Heart left ventricle (tissue), 16 donors: ENCODE measurements at regions of chr2 and their contacts with region 1.

Region 1: DNA sequence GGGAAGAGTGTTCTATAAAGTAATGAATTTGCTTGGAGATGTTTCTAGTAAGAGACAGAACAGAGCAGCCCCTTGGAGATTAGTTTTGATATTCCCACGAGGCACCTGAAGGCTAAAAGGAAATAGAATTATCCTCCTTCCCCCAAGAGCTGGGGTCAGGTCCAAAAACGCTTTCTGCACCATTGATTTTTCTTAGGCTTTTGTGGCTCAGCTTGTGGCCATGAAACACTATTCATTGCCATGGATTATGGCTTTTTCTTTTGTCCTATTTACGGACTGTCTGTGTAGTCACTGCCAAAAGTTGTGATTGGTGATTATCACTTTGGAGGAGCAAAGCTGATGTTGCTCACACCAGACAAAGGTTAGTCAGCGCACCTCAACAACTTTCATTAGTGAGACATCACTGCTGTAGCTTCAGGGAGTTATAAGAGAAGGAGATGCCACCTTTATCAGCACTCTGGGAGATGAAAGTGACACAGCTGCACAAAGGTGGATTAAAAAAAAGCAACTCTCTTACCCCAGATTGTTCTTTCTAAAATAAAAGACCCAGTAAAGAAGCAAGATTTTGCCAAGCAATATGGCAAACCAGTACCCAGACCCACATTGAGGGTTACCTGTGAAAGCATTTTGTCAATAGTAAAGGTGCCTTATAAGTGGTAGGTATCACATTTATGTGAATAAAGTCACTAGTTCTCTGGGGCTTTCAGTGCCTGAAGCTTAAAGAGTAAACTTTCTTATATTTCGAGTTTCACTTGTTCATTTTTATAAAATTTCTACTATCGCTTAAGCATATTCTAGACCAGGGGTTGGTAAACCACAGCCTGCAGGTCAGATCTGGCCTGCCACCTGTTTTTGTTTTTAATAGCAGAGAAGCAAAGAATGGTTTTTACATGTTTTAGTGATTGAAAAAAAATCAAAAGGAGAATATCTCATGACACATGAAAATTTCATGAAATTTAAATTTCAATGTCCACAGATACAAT is 10.6 kb downstream of the CXCR4 start:
- DNase-seq: no peak
- ATAC-seq: no peak
- H3K4me3 ChIP-seq: no peak overlapping the region
- H3K27ac ChIP-seq: no peak overlapping the region
- H3K4me1 ChIP-seq: peaks cover 0 to 5% (median 0%) of the 10 kb centered on the region in 12 donors
- H3K27me3 ChIP-seq: peaks cover 0 to 7% (median 0%) of the 10 kb centered on the region in 9 donors
- CTCF ChIP-seq: no peak
- POLR2A ChIP-seq: no peak

Region 2: GRCh38 chr2:136025057-136025973 is 82.0 kb before region 1 on chr2:
- intact Hi-C with region 1: no loop called
- DNase-seq: peak; percentile 82 to 86 (median 84)
- ATAC-seq: peak; percentile 93 to 99 (median 98)
- H3K4me3 ChIP-seq: peak overlapping the region in 7 of 12 donors; percentile 0 to 34 (median 18)
- H3K27ac ChIP-seq: peak overlapping the region in 7 of 12 donors; percentile 17 to 63 (median 31)
- H3K4me1 ChIP-seq: peaks cover 0 to 20% (median 2%) of the 10 kb centered on the region in 12 donors
- H3K27me3 ChIP-seq: no peaks in the 10 kb centered on the region
- CTCF ChIP-seq: no peak
- POLR2A ChIP-seq: no peak

Region 3: DNA sequence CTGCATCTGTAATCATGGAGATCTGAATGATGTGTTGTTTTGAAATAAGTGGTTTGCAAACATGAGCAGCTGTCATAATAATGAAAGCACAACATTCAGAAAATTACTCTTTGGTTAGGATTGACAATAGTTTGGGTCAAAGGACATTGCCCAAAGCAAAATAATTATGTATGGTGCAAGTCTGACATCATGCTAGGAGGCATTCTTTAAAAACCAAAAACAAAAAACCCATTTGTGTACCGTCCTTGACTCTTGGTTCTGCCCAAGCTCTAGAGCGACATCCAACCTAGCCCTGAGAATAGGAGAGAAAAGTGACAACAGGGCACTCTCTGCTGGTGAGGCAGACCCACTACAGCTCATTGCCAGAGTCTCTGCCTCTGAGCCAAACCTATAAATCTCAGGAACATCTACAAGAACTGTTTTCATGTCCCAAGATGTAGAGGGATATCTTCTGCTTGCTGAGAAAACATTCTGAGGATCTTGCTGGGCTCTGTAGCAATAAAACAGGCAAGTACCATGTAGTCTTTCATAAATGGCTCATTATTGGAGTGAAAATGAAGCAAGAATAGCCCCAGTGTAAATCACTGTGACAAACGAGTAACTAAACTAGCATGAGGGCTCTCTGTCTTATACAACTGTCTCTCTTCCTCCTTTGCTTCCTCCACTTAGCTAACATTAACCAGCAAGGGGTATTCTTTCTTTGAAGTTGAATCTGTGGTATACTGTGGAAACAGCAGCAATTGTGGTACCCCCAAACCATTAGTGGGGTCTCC is 277.4 kb after region 1 on chr2:
- intact Hi-C with region 1: loop called in 2 of 10 experiments (anchors 10 kb)
- DNase-seq: no peak
- ATAC-seq: peak; percentile 60 to 88 (median 78)
- H3K4me3 ChIP-seq: no peak overlapping the region
- H3K27ac ChIP-seq: no peak overlapping the region
- H3K4me1 ChIP-seq: peaks cover 0 to 13% (median 0%) of the 10 kb centered on the region in 12 donors
- H3K27me3 ChIP-seq: no peaks in the 10 kb centered on the region
- CTCF ChIP-seq: peak; percentile 28 to 67 (median 50)
- POLR2A ChIP-seq: no peak